Mammary epithelial cell (primary cell): ENCODE measurements at regions of chr11 and their contacts with region 1.

Region 1: DNA sequence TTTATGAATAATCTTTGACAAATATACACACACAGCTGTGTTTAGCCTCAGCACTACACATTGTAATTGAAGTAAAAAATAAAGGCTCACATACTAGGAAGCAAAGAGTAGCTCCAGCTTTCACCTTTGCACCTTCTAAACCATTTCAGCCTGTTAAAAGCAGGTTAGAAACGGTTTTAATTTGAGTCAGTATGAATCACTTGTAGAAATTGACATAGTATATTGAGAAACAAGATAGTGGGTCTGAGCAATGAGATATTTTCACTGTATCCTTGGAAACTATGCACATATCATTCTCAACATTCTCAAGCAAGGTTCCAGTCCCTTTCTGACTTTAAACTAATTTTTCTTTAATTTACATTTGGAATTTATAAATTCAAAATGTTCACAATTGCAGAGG is 380.3 kb downstream of the AASDHPPT start:
- DNase-seq: peak; percentile 81
- H3K4me3 ChIP-seq: no peak overlapping the region
- H3K27ac ChIP-seq: peak overlapping the region; percentile 81
- H3K4me1 ChIP-seq: peaks cover 16% of the 10 kb centered on the region
- H3K27me3 ChIP-seq: no peaks in the 10 kb centered on the region
- CTCF ChIP-seq: no peak

Region 2: GRCh38 chr11:106369224-106369623 is 88.5 kb before region 1 on chr11:
- CTCF ChIA-PET with region 1: no interaction called
- dilution Hi-C with region 1: no loop called
- in situ Hi-C with region 1: no loop called
- intact Hi-C with region 1: loop called (anchors 10 kb)
- DNase-seq: no peak
- H3K4me3 ChIP-seq: no peak overlapping the region
- H3K27ac ChIP-seq: peak overlapping the region; percentile 16
- H3K4me1 ChIP-seq: peaks cover 22% of the 10 kb centered on the region
- H3K27me3 ChIP-seq: no peaks in the 10 kb centered on the region
- CTCF ChIP-seq: no peak

Region 3: DNA sequence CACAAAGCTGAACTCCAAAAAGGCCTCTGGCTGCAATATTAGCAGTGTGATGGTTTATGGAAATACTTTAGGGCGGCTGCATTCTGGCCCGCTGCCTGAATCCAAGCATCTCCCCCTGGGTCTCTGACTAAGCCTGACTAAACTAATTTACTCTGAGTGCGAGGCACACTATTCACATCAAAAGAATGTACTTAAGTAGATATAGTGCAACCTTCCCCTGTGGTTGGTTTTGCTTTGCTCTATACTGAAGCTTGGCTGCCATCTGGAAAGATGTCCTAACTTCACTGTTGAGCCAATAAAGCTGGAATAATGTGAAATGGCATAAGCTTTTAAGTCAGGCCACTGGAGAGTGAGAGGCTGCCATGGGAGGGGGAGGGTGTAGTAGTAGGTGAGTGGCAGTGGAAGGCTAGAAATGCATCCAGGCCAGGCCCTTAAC is 58.6 kb before region 1 on chr11:
- CTCF ChIA-PET with region 1: no interaction called
- dilution Hi-C with region 1: no loop called
- in situ Hi-C with region 1: no loop called
- intact Hi-C with region 1: no loop called
- DNase-seq: peak; percentile 93
- H3K4me3 ChIP-seq: no peak overlapping the region
- H3K27ac ChIP-seq: peak overlapping the region; percentile 39
- H3K4me1 ChIP-seq: peaks cover 22% of the 10 kb centered on the region
- H3K27me3 ChIP-seq: no peaks in the 10 kb centered on the region
- CTCF ChIP-seq: no peak

Region 4: DNA sequence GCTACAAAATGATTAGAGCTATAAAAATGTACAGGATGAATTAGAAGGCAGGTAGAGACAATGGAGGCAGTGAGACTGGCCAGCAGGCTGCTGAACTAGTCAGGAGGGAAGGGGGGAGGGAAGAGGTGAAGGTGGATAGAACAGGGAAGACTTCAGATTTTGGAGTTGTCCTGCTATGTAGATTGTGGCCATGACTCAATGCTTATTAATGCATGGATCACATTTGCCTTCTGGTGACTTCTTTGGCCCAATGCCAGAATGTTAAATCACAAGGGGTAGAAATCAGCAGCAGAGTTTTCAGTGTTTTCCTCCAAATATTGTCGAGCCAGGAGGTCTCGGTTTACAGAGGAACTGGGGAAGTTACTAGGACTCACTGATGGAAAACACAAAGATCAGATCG is 33.6 kb before region 1 on chr11:
- CTCF ChIA-PET with region 1: no interaction called
- dilution Hi-C with region 1: no loop called
- in situ Hi-C with region 1: no loop called
- intact Hi-C with region 1: loop called (anchors 5 kb)
- DNase-seq: peak; percentile 85
- H3K4me3 ChIP-seq: no peak overlapping the region
- H3K27ac ChIP-seq: no peak overlapping the region
- H3K4me1 ChIP-seq: peaks cover 28% of the 10 kb centered on the region
- H3K27me3 ChIP-seq: no peaks in the 10 kb centered on the region
- CTCF ChIP-seq: no peak